Heart right ventricle (tissue), 16 donors: ENCODE measurements at regions of chr18 and their contacts with region 1.

Region 1: GRCh38 chr18:68660354-68661183 is 54.3 kb downstream of the TMX3 start:
- DNase-seq: no peak
- ATAC-seq: no peak
- H3K4me3 ChIP-seq: no peak overlapping the region
- H3K27ac ChIP-seq: no peak overlapping the region
- H3K4me1 ChIP-seq: no peaks in the 10 kb centered on the region
- H3K27me3 ChIP-seq: no peaks in the 10 kb centered on the region
- CTCF ChIP-seq: peak in 8 of 9 donors; percentile 10 to 66 (median 59)

Region 2: DNA sequence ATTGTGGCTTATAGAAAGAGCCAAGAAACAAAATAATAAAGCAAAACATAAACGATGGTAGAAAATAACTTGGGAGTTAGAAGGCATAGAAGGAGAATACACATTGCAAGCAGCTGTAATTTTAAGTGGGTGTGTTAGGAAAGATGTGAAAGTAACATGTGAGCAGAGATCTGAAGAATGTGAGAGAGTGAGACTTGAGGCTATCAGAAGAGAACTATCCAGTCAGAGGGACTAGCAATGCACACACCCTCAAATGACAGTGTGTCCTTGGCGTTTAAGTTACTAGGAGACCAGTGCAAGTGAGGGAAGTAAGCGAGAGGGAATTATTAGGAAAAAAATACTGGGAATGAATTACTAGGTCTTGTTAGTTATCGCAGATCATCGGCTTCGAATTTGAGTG is 1448.9 kb before region 1 on chr18:
- intact Hi-C with region 1: loop called in 7 of 10 experiments (anchors 2 to 5 kb)
- DNase-seq: no peak
- ATAC-seq: no peak
- H3K4me3 ChIP-seq: no peak overlapping the region
- H3K27ac ChIP-seq: no peak overlapping the region
- H3K4me1 ChIP-seq: no peaks in the 10 kb centered on the region
- H3K27me3 ChIP-seq: no peaks in the 10 kb centered on the region
- CTCF ChIP-seq: no peak

Region 3: DNA sequence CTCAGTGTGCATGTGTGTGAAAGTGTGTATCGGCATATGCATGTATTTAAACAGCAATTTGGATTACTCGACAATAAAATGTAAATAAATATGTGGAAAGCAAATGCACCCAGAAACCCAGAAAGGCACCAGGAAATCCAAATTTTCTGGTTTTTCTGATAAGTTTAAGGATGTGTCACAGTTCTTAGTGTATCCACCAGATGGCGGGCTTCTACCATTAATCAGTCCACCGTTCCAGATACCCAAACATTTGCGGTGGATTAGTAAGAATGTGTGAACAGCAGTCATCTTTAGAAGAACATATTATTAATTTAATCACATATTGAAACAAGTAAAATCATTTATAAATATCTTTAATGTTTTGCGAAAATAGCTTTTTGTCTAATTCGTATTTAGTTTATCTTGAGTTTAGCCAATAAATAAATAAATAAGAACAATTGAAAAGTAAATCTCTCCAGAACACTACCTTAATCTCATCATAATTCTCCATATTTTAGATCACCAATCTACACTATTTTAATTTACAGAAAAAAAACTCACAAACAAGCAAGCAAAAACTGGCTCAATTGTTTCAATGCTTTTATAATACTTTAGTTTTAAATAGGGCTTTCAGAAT is 1442.9 kb before region 1 on chr18:
- intact Hi-C with region 1: loop called (anchors 1 to 5 kb)
- DNase-seq: peak in 1 of 2 donors; percentile 33
- ATAC-seq: peak in 7 of 8 donors; percentile 51 to 76 (median 67)
- H3K4me3 ChIP-seq: no peak overlapping the region
- H3K27ac ChIP-seq: no peak overlapping the region
- H3K4me1 ChIP-seq: no peaks in the 10 kb centered on the region
- H3K27me3 ChIP-seq: no peaks in the 10 kb centered on the region
- CTCF ChIP-seq: peak; percentile 61 to 85 (median 80)

Region 4: DNA sequence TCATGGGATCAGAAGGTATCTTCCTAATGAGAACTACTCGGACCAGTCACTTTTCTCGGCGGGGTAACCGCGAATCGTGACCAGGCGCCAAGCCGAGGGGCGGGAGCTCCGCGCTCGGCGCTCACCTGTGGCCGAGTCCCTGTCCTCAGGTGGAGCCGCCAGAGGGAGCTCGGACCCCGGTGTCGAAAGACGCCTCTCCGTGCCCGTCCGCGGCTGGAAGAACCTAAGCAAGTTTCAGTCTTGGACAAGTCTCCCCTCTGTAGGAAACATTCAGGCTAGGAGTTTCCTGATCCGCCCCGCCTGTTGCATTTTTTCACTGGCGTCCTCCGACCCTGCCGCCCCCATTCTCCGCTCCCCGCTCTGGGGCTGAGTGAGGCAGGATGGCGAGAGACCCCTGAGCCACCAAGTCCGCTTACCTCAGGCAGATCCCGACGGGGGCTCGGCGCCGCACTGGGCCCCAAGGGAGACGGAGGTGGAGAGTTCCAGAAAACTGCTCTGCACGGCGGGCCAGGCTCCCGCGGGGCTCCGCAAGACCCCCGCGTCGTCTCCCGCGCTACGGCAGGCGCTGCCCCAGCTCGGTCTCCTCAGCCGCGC is 1144.5 kb before region 1 on chr18:
- intact Hi-C with region 1: loop called in 2 of 10 experiments (anchors 10 kb)
- DNase-seq: peak; percentile 81
- ATAC-seq: peak; percentile 62 to 84 (median 73)
- H3K4me3 ChIP-seq: peak overlapping the region; percentile 68 to 98 (median 86)
- H3K27ac ChIP-seq: peak overlapping the region; percentile 64 to 92 (median 86)
- H3K4me1 ChIP-seq: peaks cover 0 to 22% (median 11%) of the 10 kb centered on the region in 9 donors
- H3K27me3 ChIP-seq: peaks cover 0 to 16% (median 0%) of the 10 kb centered on the region in 7 donors
- CTCF ChIP-seq: peak; percentile 53 to 85 (median 69)

Region 5: GRCh38 chr18:68362907-68363306 is 297.7 kb before region 1 on chr18:
- intact Hi-C with region 1: no loop called
- DNase-seq: no peak
- ATAC-seq: no peak
- H3K4me3 ChIP-seq: no peak overlapping the region
- H3K27ac ChIP-seq: no peak overlapping the region
- H3K4me1 ChIP-seq: no peaks in the 10 kb centered on the region
- H3K27me3 ChIP-seq: no peaks in the 10 kb centered on the region
- CTCF ChIP-seq: no peak

Region 6: DNA sequence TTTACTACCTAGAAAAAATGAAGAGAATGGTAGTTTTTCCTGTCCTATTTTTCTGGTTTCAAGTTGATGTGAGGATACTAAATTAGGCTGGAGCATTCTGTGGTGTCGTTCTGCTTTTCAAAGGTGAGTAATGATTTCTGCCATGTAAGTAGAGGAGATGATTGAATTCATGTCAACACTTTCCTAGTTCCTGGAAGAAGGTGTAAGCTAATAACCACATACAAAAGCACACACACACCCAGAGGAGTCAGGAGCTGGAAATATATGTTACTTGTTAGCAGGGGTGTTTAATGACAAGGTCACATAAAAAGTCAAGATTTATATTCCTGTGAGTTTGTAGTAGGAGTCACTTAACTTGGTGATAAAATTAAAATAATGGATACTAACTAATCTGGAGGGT is 117.7 kb before region 1 on chr18:
- intact Hi-C with region 1: no loop called
- DNase-seq: no peak
- ATAC-seq: no peak
- H3K4me3 ChIP-seq: no peak overlapping the region
- H3K27ac ChIP-seq: no peak overlapping the region
- H3K4me1 ChIP-seq: no peaks in the 10 kb centered on the region
- H3K27me3 ChIP-seq: no peaks in the 10 kb centered on the region
- CTCF ChIP-seq: no peak

Region 7: DNA sequence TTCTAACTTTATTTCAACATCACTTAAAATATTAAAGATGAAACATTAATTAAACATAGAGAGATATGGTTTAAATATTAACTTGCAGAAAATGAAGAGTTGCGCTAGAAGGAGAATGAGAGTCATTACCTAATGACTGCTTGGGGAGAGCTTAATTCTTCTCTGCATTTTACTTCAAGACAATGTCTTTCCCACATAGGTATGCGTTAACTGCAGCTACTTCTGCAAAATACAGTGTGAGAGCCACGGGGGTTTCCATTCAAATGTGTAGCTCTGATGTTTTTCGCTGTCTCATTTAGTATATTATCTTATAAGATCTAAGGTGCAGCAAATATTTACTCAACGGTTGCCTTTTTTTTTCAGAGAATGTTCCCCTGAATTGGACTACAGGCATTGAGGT is 72.4 kb before region 1 on chr18:
- intact Hi-C with region 1: no loop called
- DNase-seq: no peak
- ATAC-seq: no peak
- H3K4me3 ChIP-seq: no peak overlapping the region
- H3K27ac ChIP-seq: no peak overlapping the region
- H3K4me1 ChIP-seq: no peaks in the 10 kb centered on the region
- H3K27me3 ChIP-seq: no peaks in the 10 kb centered on the region
- CTCF ChIP-seq: no peak

Region 8: GRCh38 chr18:68638613-68639012 is 22.0 kb before region 1 on chr18:
- intact Hi-C with region 1: loop called in 1 of 10 experiments (anchors 1 kb)
- DNase-seq: no peak
- ATAC-seq: no peak
- H3K4me3 ChIP-seq: no peak overlapping the region
- H3K27ac ChIP-seq: no peak overlapping the region
- H3K4me1 ChIP-seq: no peaks in the 10 kb centered on the region
- H3K27me3 ChIP-seq: no peaks in the 10 kb centered on the region
- CTCF ChIP-seq: no peak

Region 9: DNA sequence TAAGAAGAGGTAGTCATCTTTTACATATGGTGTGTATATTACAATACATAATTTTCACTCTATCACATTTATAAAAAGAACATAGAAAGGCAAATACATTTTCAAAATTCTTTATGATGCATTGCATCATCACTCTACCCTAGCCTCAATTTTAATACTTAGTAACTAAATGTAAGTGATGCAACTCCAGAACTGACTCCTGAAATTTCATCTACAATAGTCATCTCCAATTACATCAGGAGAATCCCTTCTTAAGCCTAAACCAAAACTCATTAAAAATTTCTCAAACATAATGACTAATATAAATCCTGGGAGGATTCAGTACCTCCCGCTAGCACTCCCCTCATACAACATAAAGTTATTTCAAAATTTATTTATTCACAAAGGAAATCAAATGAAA is 38.5 kb after region 1 on chr18:
- intact Hi-C with region 1: no loop called
- DNase-seq: no peak
- ATAC-seq: no peak
- H3K4me3 ChIP-seq: no peak overlapping the region
- H3K27ac ChIP-seq: no peak overlapping the region
- H3K4me1 ChIP-seq: peaks cover 0 to 11% (median 0%) of the 10 kb centered on the region in 9 donors
- H3K27me3 ChIP-seq: no peaks in the 10 kb centered on the region
- CTCF ChIP-seq: no peak